PC-9 (cell line): ENCODE measurements at regions of chr4 and their contacts with region 1.

Region 1: DNA sequence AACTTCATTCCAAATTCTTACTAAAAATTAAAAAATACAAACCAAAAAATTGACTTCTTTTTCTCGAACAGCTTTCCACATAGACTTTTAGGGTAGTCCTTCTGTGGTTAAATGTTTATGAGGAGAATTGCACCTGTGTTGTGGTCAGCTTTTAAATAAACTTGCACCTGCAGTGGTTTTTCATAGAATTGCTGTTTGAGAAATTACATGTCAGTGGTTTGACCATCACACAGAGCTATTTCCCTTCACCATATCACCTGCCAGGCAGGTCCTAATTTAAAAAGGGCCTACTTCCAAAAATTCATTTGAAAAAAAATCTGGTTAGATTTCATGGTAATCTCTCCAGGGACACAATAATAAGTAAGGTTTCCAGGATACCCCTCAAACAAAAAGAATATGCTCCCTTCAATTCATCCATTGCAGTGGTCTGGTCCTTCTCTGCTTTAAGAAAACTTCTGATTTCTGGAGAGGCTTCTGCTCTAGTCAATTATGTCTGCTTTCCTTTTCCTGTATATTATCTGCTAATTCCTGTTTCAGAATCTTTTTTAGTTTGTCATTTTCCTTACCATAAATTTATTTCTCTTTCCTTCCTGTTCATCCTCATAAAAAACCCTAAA is 9.8 kb upstream of the UTP3 start:
- DNase-seq: no peak
- H3K4me3 ChIP-seq: no peak overlapping the region
- H3K27ac ChIP-seq: no peak overlapping the region
- H3K4me1 ChIP-seq: no peaks in the 10 kb centered on the region
- H3K27me3 ChIP-seq: no peaks in the 10 kb centered on the region
- CTCF ChIP-seq: no peak

Region 2: GRCh38 chr4:71074452-71075299 is 396.2 kb after region 1 on chr4:
- CTCF ChIA-PET with region 1: no interaction called
- POLR2A ChIA-PET with region 1: interaction called, 11 read pairs
- intact Hi-C with region 1: no loop called
- DNase-seq: no peak
- H3K4me3 ChIP-seq: no peak overlapping the region
- H3K27ac ChIP-seq: no peak overlapping the region
- H3K4me1 ChIP-seq: no peaks in the 10 kb centered on the region
- H3K27me3 ChIP-seq: no peaks in the 10 kb centered on the region
- CTCF ChIP-seq: no peak